ENCODE measurements at regions of chr13 and their contacts with region 1.

Region 1: GRCh38 chr13:43054803-43055802 is 31.7 kb downstream of the DNAJC15 start:
- DNase-seq: peak in 5 of 9 experiments; percentile 17 to 60 (median 40)
- ATAC-seq: peak; percentile 35
- H3K4me3 ChIP-seq: peak overlapping the region; percentile 55 to 71
- H3K4me3 Mint-ChIP-seq: no peak overlapping the region
- H3K27ac ChIP-seq: peak overlapping the region; percentile 75 to 88
- H3K27ac Mint-ChIP-seq: no peak overlapping the region
- H3K4me1 ChIP-seq: peaks cover 38% of the 10 kb centered on the region
- H3K4me1 Mint-ChIP-seq: peaks cover 34% of the 10 kb centered on the region
- H3K27me3 ChIP-seq: no peaks in the 10 kb centered on the region
- H3K27me3 Mint-ChIP-seq: no peaks in the 10 kb centered on the region
- CTCF ChIP-seq: no peak

Region 2: GRCh38 chr13:42991892-42992763 is 63.0 kb before region 1 on chr13 and contains the start of gene EPSTI1:
- CTCF ChIA-PET with region 1: no interaction called
- POLR2A ChIA-PET with region 1: interaction called, 19 read pairs
- intact Hi-C with region 1: loop called (anchors 1 kb)
- DNase-seq: peak; percentile 41 to 89 (median 74)
- ATAC-seq: peak; percentile 83
- H3K4me3 ChIP-seq: peak within 1 kb of the TSS; percentile 74 to 78
- H3K4me3 Mint-ChIP-seq: peak within 1 kb of the TSS; percentile 93
- H3K27ac ChIP-seq: peak within 1 kb of the TSS; percentile 96 to 97
- H3K27ac Mint-ChIP-seq: peak within 1 kb of the TSS; percentile 99
- H3K4me1 ChIP-seq: peaks cover 27% of the 10 kb centered on the region
- H3K4me1 Mint-ChIP-seq: peaks cover 34% of the 10 kb centered on the region
- H3K27me3 ChIP-seq: no peaks in the 10 kb centered on the region
- H3K27me3 Mint-ChIP-seq: no peaks in the 10 kb centered on the region
- CTCF ChIP-seq: no peak
- total RNA-seq, gene EPSTI1: 8.8 to 9.7 TPM